HepG2 (cell line): ENCODE measurements at regions of chr18 and their contacts with region 1.

Region 1: GRCh38 chr18:3885209-3885792 is 435.3 kb downstream of the TGIF1 start:
- DNase-seq: peak; percentile 27
- ATAC-seq: peak; percentile 95
- H3K4me3 ChIP-seq: no peak overlapping the region
- H3K27ac ChIP-seq: no peak overlapping the region
- H3K4me1 ChIP-seq: no peaks in the 10 kb centered on the region
- H3K27me3 ChIP-seq: no peaks in the 10 kb centered on the region; a peak in 1 of 5 replicates
- CTCF ChIP-seq: no peak
- EP300 ChIP-seq: no peak
- POLR2A ChIP-seq: no peak
- RAD21 ChIP-seq: no peak

Region 2: GRCh38 chr18:2878656-2879330 is 1006.5 kb before region 1 on chr18:
- CTCF ChIA-PET with region 1: no interaction called
- POLR2A ChIA-PET with region 1: no interaction called
- in situ Hi-C with region 1: no loop called
- intact Hi-C with region 1: loop called (anchors 5 kb)
- DNase-seq: no peak
- ATAC-seq: no peak
- H3K4me3 ChIP-seq: no peak overlapping the region
- H3K27ac ChIP-seq: no peak overlapping the region
- H3K4me1 ChIP-seq: peaks cover 16% of the 10 kb centered on the region
- H3K27me3 ChIP-seq: peaks cover 1 to 31% of the 10 kb centered on the region in 2 experiments
- CTCF ChIP-seq: no peak
- EP300 ChIP-seq: no peak
- POLR2A ChIP-seq: no peak
- RAD21 ChIP-seq: no peak